Sigmoid colon (tissue), 7 donors: ENCODE measurements at regions of chr9 and their contacts with region 1.

Region 1: DNA sequence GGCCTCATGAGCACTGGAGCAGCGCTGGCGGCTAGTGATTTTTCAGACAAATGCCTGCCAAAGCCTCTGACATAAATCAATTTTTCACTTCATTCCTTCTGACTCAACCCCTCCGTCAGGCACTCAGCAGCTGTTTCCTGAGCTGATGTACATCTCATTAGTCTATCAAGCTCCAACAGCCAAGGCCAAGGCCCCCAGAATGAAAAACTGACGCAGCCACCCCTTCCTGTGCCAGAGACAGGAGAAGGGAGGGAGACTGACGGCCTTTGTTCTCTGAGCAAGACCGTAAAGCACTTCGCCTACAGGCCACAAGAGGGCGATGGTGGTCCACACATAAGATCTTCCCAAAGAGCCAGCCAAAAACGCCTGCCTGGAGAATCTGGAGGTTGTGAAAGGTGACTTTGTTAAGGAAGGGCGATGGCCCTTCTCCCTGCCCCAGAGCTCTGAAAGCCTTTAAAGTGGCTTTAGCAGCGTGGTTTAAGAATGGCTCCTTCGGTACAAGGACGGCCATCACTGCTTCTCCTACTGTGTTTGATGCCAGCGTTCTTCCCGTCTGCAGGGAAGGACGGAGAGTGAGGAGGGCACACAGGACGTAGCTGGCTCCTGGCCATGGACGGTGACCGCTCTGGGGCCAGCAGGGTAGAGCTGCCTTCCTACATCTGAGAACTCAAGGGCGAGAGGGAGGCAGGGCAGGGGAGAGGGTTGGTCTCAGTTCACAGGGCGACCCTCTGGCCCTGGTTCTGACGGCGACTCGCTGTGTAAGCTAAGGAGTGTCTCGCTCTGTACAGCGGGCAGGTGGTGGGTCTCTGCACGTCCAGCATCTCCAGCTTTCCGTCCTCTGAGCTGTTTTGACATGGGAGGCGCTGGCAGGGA is 37.0 kb downstream of the ALG2 start:
- DNase-seq: peak; percentile 93
- H3K4me3 ChIP-seq: peak overlapping the region in 3 of 4 donors; percentile 31 to 40 (median 32)
- H3K27ac ChIP-seq: no peak overlapping the region
- H3K4me1 ChIP-seq: peaks cover 0 to 8% (median 7%) of the 10 kb centered on the region in 4 donors
- H3K27me3 ChIP-seq: no peaks in the 10 kb centered on the region
- CTCF ChIP-seq: peak; percentile 77 to 93 (median 84)
- EP300 ChIP-seq: no peak
- POLR2A ChIP-seq: no peak

Region 2: DNA sequence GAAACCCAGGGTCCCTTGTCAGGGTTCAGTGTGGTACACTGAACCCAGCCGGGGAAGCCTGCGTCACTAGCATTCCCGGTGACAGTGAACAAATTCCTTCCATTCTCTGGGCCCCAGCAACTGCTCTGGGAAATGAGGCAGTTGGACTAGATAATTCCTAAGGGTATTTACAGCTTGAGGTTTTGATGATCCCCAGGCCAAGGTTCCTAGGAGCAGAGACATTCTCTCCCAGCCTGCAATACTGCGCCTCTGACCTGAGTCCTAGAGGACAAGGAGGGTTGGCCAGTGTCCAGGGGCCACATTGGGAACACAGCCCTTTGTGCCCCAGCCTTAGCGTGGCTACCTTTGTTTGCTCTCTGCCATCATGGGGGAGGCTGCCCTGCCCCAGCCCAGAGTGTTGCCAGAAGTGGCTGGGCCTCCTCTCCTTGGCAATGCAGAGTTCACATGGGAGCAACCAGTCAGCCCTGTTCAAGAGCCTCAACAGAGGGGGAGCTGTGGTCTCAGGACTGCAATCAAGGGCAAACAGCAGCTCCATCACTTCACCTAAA is 215.5 kb after region 1 on chr9:
- intact Hi-C with region 1: no loop called
- DNase-seq: no peak
- H3K4me3 ChIP-seq: no peak overlapping the region
- H3K27ac ChIP-seq: no peak overlapping the region
- H3K4me1 ChIP-seq: no peaks in the 10 kb centered on the region
- H3K27me3 ChIP-seq: no peaks in the 10 kb centered on the region
- CTCF ChIP-seq: no peak
- EP300 ChIP-seq: peak in 1 of 4 donors; percentile 47
- POLR2A ChIP-seq: no peak

Region 3: GRCh38 chr9:99699396-99699795 is 514.7 kb after region 1 on chr9:
- intact Hi-C with region 1: no loop called
- DNase-seq: no peak
- H3K4me3 ChIP-seq: no peak overlapping the region
- H3K27ac ChIP-seq: no peak overlapping the region
- H3K4me1 ChIP-seq: no peaks in the 10 kb centered on the region
- H3K27me3 ChIP-seq: no peaks in the 10 kb centered on the region
- CTCF ChIP-seq: no peak
- EP300 ChIP-seq: no peak
- POLR2A ChIP-seq: no peak

Region 4: DNA sequence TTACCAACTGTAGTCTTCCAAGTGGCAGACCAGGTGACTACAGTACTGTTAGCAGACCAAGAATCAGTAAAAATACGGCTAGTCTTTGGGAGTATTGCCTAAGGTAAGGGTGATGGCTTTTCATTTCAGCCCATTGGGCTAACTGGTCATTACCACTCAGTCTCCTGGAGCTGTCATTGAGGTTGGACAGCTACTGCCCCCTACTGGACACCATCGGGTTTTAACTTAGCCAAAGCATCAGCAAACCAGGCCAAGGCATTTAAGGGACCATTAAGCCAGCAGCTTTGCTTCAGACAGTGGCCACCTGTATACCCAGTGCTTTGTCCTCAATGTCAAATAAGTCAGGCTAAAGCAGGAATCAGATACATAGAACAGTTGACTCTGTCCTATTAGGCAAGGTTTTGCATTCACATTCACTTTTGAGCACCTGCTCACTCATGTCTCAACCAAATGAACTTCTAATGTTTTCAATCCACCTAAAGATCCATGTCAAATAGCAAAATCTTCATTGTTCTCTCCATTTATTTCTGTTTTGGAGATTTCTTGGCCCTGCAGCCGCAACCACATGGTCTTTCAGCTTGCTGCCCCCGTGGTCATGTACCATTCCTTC is 1031.6 kb after region 1 on chr9:
- intact Hi-C with region 1: loop called (anchors 10 kb)
- DNase-seq: no peak
- H3K4me3 ChIP-seq: no peak overlapping the region
- H3K27ac ChIP-seq: no peak overlapping the region
- H3K4me1 ChIP-seq: peaks cover 0 to 6% (median 3%) of the 10 kb centered on the region in 4 donors
- H3K27me3 ChIP-seq: no peaks in the 10 kb centered on the region
- CTCF ChIP-seq: peak in 3 of 4 experiments; percentile 17 to 41 (median 21)
- EP300 ChIP-seq: no peak
- POLR2A ChIP-seq: no peak